Right ventricle myocardium inferior (tissue), 1 donor: ENCODE measurements at regions of chr10 and their contacts with region 1.

Region 1: DNA sequence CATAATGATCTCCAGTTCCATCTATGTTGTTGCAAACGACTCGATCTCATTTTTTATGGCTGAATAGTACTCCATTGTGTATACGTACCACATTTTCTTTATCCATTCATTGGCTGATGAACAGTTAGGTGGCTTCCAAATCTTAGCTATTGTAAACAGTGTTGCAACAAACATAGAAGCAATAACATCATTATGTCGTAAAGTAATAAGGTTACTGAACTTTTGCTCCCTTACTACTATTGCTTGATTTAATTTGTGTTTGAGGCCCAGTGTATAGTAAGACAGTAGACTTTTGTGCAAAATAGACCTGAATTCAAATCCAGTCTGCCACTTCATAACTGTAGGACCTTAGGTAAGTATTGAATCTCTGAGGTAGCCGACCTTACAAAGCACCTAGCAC is 200.1 kb upstream of the CELF2 start:
- DNase-seq: no peak
- ATAC-seq: no peak

Region 2: GRCh38 chr10:10845826-10846503 is 28.4 kb after region 1 on chr10:
- intact Hi-C with region 1: loop called (anchors 1 kb)
- DNase-seq: no peak
- ATAC-seq: no peak